CD8-positive, alpha-beta T cell (primary cell): ENCODE measurements at regions of chr10 and their contacts with region 1.

Region 1: DNA sequence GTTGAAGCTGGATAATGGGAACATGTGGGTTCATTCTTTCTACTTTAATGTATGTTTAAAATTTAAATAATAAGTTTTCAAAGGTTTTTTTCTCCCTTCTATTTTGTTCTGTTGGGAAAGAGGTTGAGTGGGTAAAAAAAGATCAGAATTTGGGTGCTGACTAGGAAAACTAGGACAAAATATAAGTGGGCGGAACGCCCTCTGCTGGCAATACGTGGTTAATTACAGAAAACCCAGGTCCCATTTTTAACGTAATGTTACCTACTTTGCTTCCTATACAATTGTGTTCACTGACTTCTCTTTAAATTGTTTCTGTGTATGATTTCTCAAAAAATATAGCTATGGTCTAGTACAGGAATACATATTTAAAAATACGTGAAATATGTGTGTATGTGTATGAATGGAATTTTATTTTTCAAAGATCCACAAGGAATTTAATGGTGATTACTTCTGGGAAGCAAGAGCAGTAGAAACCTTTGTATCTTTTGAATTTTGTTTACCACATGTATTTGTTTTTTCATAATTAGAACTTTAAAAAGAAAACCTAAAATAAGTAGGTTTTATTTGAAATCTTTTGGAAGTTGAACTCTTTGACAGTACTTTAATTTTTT is 8.7 kb downstream of the ECD start:
- DNase-seq: peak; percentile 22 to 76 (median 64)
- ATAC-seq: peak; percentile 71
- H3K4me3 ChIP-seq: no peak overlapping the region
- H3K4me3 Mint-ChIP-seq: no peak overlapping the region
- H3K27ac ChIP-seq: no peak overlapping the region
- H3K27ac Mint-ChIP-seq: no peak overlapping the region
- H3K4me1 ChIP-seq: peaks cover 13% of the 10 kb centered on the region
- H3K4me1 Mint-ChIP-seq: peaks cover 38% of the 10 kb centered on the region
- H3K27me3 ChIP-seq: no peaks in the 10 kb centered on the region
- H3K27me3 Mint-ChIP-seq: no peaks in the 10 kb centered on the region
- CTCF ChIP-seq: peak; percentile 88

Region 2: GRCh38 chr10:73110345-73110849 is 48.7 kb before region 1 on chr10 and contains the start of gene NUDT13:
- CTCF ChIA-PET with region 1: interaction called, 10 read pairs
- POLR2A ChIA-PET with region 1: no interaction called
- intact Hi-C with region 1: no loop called
- DNase-seq: peak; percentile 10 to 79 (median 48)
- ATAC-seq: peak; percentile 91
- H3K4me3 ChIP-seq: peak within 1 kb of the TSS; percentile 57 to 59
- H3K4me3 Mint-ChIP-seq: peak within 1 kb of the TSS; percentile 95
- H3K27ac ChIP-seq: peak within 1 kb of the TSS; percentile 36 to 73
- H3K27ac Mint-ChIP-seq: peak within 1 kb of the TSS; percentile 89
- H3K4me1 ChIP-seq: no peaks in the 10 kb centered on the region
- H3K4me1 Mint-ChIP-seq: peaks cover 12% of the 10 kb centered on the region
- H3K27me3 ChIP-seq: no peaks in the 10 kb centered on the region
- H3K27me3 Mint-ChIP-seq: no peaks in the 10 kb centered on the region
- CTCF ChIP-seq: no peak
- total RNA-seq, gene NUDT13: 0.50 to 0.71 TPM

Region 3: DNA sequence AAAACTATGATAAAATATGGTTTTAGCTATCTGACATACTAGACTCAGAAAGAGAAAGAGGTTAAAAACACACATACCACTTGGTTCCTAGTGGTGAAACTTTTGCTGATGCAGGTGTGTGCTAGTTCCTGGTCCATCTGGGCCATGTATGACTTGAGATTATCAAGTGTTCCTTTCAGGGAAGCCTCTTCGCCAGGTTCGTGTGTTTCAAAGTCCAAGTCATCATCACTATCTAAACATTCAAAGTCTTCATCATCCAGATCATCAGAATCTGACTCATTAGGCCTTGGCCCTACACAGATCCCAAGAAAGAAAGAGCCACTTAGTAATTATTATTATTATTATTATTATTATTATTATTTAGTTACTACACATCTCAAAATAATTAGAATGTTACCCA is 22.5 kb before region 1 on chr10:
- CTCF ChIA-PET with region 1: interaction called, 14 read pairs
- POLR2A ChIA-PET with region 1: interaction called, 3 read pairs
- intact Hi-C with region 1: no loop called
- DNase-seq: no peak
- ATAC-seq: no peak
- H3K4me3 ChIP-seq: no peak overlapping the region
- H3K4me3 Mint-ChIP-seq: no peak overlapping the region
- H3K27ac ChIP-seq: no peak overlapping the region
- H3K27ac Mint-ChIP-seq: no peak overlapping the region
- H3K4me1 ChIP-seq: no peaks in the 10 kb centered on the region
- H3K4me1 Mint-ChIP-seq: no peaks in the 10 kb centered on the region
- H3K27me3 ChIP-seq: no peaks in the 10 kb centered on the region
- H3K27me3 Mint-ChIP-seq: no peaks in the 10 kb centered on the region
- CTCF ChIP-seq: no peak